ENCODE measurements at regions of chr5 and their contacts with region 1.

Region 1: DNA sequence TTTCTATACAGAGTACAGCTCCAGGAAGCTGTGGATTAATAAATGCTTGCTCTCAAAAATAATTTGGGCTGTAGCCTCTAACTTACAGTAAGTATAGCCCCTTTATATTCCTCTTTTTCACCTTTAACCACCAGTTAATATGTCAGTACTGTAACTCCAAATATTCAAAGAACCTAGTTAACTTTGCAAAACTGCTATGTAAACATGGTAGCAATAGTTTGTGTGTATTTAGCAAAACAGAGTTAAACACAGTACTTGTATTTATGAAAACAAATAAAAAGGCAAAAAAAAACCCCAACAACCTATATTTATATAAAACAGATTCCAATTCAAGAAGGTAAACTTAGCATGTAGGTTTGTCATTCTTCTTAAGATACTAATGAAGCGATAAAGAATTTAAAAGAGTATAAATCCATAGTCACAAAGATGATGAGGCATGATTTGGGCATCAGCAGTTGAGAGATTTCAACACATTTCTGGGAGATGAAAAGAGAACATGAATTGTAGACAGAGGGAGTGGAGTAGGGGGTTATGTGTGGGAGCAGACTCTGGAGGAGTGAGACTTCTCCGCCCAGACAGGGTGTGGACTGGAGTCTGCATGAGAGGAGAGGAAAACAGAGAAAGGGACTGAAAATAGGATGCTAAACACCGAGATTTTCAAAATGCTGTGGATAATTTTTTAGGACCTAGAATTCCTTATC is 47.0 kb upstream of the F2RL1 start:
- DNase-seq: no peak
- H3K4me3 ChIP-seq: no peak overlapping the region
- H3K27ac ChIP-seq: no peak overlapping the region
- H3K4me1 ChIP-seq: peaks cover 0 to 2% (median 0%) of the 10 kb centered on the region in 4 experiments; a peak in 1 of 7 replicates
- H3K27me3 ChIP-seq: no peaks in the 10 kb centered on the region
- CTCF ChIP-seq: no peak
- EP300 ChIP-seq: no peak
- POLR2A ChIP-seq: no peak
- RAD21 ChIP-seq: no peak

Region 2: GRCh38 chr5:76594107-76594506 is 177.7 kb before region 1 on chr5:
- CTCF ChIA-PET with region 1: no interaction called
- POLR2A ChIA-PET with region 1: no interaction called
- DNase-seq: no peak
- H3K4me3 ChIP-seq: no peak overlapping the region
- H3K27ac ChIP-seq: no peak overlapping the region
- H3K4me1 ChIP-seq: no peaks in the 10 kb centered on the region
- H3K27me3 ChIP-seq: no peaks in the 10 kb centered on the region
- CTCF ChIP-seq: no peak
- EP300 ChIP-seq: no peak
- POLR2A ChIP-seq: no peak
- RAD21 ChIP-seq: no peak

Region 3: GRCh38 chr5:76641514-76642120 is 130.2 kb before region 1 on chr5:
- CTCF ChIA-PET with region 1: interaction called, 10 read pairs
- POLR2A ChIA-PET with region 1: no interaction called
- DNase-seq: peak in 1 of 2 experiments; percentile 76
- H3K4me3 ChIP-seq: no peak overlapping the region
- H3K27ac ChIP-seq: no peak overlapping the region
- H3K4me1 ChIP-seq: 0 out of 7 replicates have a peak, but pooled peaks cover 0 to 4% (median 0%) of the 10 kb centered on the region in 4 experiments
- H3K27me3 ChIP-seq: no peaks in the 10 kb centered on the region
- CTCF ChIP-seq: peak in 2 of 3 experiments; percentile 75 to 85; a peak in 3 of 4 replicates
- EP300 ChIP-seq: no peak
- POLR2A ChIP-seq: no peak
- RAD21 ChIP-seq: peak; percentile 92

Region 4: DNA sequence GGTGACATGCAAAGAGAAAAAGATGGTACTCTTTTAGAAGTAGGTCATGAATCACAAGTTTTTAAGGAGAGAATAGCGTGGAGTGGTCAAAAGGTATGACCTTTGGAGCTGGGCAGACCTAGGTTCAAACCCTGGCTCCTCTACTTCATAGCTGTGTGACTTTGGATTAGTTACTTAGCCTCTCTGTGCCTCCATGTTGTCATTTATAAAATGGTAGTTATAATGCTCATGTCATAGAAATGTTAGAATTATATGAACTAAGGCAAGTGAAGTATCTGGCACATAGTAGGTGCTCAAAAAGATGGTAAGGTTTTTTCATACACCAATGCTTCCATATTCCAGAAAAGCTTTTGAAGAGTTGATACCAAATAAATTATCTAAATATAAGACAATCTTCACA is 48.6 kb before region 1 on chr5:
- CTCF ChIA-PET with region 1: interaction called, 24 read pairs
- POLR2A ChIA-PET with region 1: no interaction called
- DNase-seq: no peak
- H3K4me3 ChIP-seq: no peak overlapping the region
- H3K27ac ChIP-seq: no peak overlapping the region
- H3K4me1 ChIP-seq: no peaks in the 10 kb centered on the region
- H3K27me3 ChIP-seq: no peaks in the 10 kb centered on the region
- CTCF ChIP-seq: no peak
- EP300 ChIP-seq: no peak
- POLR2A ChIP-seq: no peak
- RAD21 ChIP-seq: no peak

Region 5: GRCh38 chr5:76754668-76755078 is 17.2 kb before region 1 on chr5:
- CTCF ChIA-PET with region 1: interaction called, 16 read pairs
- POLR2A ChIA-PET with region 1: no interaction called
- DNase-seq: peak in 1 of 2 experiments; percentile 33
- H3K4me3 ChIP-seq: no peak overlapping the region
- H3K27ac ChIP-seq: no peak overlapping the region
- H3K4me1 ChIP-seq: no peaks in the 10 kb centered on the region
- H3K27me3 ChIP-seq: no peaks in the 10 kb centered on the region
- CTCF ChIP-seq: no peak
- EP300 ChIP-seq: no peak
- POLR2A ChIP-seq: no peak
- RAD21 ChIP-seq: no peak

Region 6: GRCh38 chr5:76841361-76841760 is 69.5 kb after region 1 on chr5:
- CTCF ChIA-PET with region 1: interaction called, 13 read pairs
- POLR2A ChIA-PET with region 1: no interaction called
- DNase-seq: no peak
- H3K4me3 ChIP-seq: no peak overlapping the region
- H3K27ac ChIP-seq: no peak overlapping the region
- H3K4me1 ChIP-seq: peaks cover 0 to 3% (median 0%) of the 10 kb centered on the region in 4 experiments; a peak in 3 of 7 replicates
- H3K27me3 ChIP-seq: no peaks in the 10 kb centered on the region; a peak in 2 of 7 replicates
- CTCF ChIP-seq: no peak
- EP300 ChIP-seq: no peak
- POLR2A ChIP-seq: no peak
- RAD21 ChIP-seq: no peak

Measured in H1 (cell line).